A673 (cell line): ENCODE measurements at regions of chr11 and their contacts with region 1.

Region 1: GRCh38 chr11:76152086-76152681 is 54.1 kb downstream of the WNT11 start:
- DNase-seq: peak; percentile 92
- H3K4me3 ChIP-seq: peak overlapping the region; percentile 43
- H3K27ac ChIP-seq: no peak overlapping the region
- H3K4me1 ChIP-seq: no peaks in the 10 kb centered on the region
- H3K27me3 ChIP-seq: no peaks in the 10 kb centered on the region
- CTCF ChIP-seq: peak; percentile 100

Region 2: DNA sequence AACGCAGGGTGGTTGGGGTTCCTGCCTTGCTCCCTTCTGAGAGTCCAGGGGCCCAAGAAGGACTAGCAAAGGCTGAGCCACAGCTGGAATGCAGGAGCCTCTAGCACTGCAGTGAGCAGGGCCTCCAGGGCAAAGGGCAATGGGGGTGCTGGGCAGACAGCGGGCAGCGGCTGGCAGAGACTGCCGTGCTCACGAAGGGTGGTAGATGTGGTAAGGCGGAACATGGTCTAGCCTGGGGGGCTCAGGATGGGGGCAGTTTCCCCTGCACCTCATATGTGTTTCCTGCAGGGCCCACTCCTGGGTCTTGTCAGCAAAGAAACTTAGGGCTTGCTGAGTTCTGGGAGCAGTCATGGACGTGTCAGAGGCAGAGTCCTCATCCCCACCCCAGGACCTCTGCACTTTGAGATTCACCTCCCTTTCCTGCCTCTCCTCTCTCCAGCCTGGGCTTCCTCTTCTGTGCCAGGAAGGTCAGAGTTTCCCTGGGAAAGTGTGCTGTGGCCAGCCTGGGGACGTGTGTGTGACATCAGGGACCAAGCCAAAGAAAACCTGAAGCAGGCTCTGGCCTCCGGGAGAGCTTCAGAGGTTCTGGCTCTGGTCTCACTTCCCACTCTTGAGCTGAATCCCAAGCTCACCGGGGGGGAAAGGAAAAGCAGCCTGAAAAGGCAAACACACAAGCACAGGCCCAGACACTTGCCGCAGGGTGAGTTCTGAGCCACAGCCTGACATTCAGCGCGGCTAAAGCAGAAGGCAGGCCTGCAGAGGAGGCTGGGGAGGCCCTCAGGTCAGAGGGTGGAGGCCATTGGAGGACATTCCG is 430.1 kb before region 1 on chr11:
- CTCF ChIA-PET with region 1: no interaction called
- POLR2A ChIA-PET with region 1: no interaction called
- intact Hi-C with region 1: loop called (anchors 1 kb)
- DNase-seq: no peak
- H3K4me3 ChIP-seq: no peak overlapping the region
- H3K27ac ChIP-seq: no peak overlapping the region
- H3K4me1 ChIP-seq: no peaks in the 10 kb centered on the region
- H3K27me3 ChIP-seq: no peaks in the 10 kb centered on the region
- CTCF ChIP-seq: no peak

Region 3: DNA sequence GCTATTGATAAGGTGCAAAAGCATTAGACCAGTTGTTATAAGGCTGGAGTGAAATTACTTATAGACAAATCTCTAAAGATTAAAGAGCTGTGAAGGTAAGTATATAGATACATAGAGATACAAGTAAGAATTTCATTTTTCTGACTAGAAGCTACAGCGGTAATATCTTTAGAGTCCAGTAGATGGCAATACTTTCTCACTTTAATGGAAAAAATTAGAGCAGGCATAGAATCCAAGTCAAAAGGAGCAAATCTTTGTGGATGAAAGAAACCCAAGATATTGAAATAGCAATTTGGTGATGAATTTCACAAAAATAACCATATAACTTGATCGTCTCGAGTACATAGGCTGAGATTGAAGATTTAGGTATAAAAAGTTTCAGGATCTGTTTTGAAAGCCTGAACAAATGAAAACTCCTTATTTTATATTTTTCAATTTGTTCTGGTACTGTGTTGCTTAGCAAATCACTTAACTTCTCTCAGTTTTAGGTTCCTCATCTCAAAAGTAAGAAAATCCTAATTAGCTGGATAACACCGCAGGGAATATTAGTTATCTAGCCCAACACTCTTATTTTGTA is 255.3 kb before region 1 on chr11:
- CTCF ChIA-PET with region 1: interaction called, 33 read pairs
- POLR2A ChIA-PET with region 1: no interaction called
- intact Hi-C with region 1: loop called (anchors 1 kb)
- DNase-seq: peak; percentile 75
- H3K4me3 ChIP-seq: no peak overlapping the region
- H3K27ac ChIP-seq: no peak overlapping the region
- H3K4me1 ChIP-seq: no peaks in the 10 kb centered on the region
- H3K27me3 ChIP-seq: no peaks in the 10 kb centered on the region
- CTCF ChIP-seq: peak; percentile 81

Region 4: GRCh38 chr11:76013526-76013925 is 138.7 kb before region 1 on chr11:
- CTCF ChIA-PET with region 1: no interaction called
- POLR2A ChIA-PET with region 1: no interaction called
- intact Hi-C with region 1: no loop called
- DNase-seq: no peak
- H3K4me3 ChIP-seq: no peak overlapping the region
- H3K27ac ChIP-seq: no peak overlapping the region
- H3K4me1 ChIP-seq: no peaks in the 10 kb centered on the region
- H3K27me3 ChIP-seq: no peaks in the 10 kb centered on the region
- CTCF ChIP-seq: no peak

Region 5: DNA sequence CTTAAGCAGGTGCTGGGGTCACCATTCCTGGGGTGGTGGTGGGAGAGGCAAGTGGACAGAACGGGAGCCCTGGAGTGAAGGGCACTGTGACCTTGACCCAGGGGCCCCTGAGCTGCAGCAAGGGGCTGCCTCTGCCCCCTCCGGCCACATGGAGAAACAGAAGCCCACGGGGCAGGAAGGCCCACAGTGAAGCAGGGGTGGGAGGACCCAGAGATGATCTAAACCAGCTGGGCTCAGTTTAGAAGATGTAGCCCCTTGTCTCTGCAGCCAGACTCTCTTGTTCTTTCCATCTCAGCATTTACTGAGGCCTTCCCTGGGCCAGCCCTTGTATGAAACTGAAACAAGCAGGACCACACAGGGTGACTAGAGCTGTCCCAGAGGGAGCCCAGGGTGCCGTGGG is 23.6 kb after region 1 on chr11:
- CTCF ChIA-PET with region 1: no interaction called
- POLR2A ChIA-PET with region 1: interaction called, 3 read pairs
- intact Hi-C with region 1: loop called (anchors 1 kb)
- DNase-seq: no peak
- H3K4me3 ChIP-seq: no peak overlapping the region
- H3K27ac ChIP-seq: no peak overlapping the region
- H3K4me1 ChIP-seq: no peaks in the 10 kb centered on the region
- H3K27me3 ChIP-seq: no peaks in the 10 kb centered on the region
- CTCF ChIP-seq: no peak

Region 6: GRCh38 chr11:76734456-76735420 is 582.6 kb after region 1 on chr11:
- CTCF ChIA-PET with region 1: no interaction called
- POLR2A ChIA-PET with region 1: no interaction called
- intact Hi-C with region 1: no loop called
- DNase-seq: no peak
- H3K4me3 ChIP-seq: no peak overlapping the region
- H3K27ac ChIP-seq: no peak overlapping the region
- H3K4me1 ChIP-seq: no peaks in the 10 kb centered on the region
- H3K27me3 ChIP-seq: no peaks in the 10 kb centered on the region
- CTCF ChIP-seq: no peak

Region 7: DNA sequence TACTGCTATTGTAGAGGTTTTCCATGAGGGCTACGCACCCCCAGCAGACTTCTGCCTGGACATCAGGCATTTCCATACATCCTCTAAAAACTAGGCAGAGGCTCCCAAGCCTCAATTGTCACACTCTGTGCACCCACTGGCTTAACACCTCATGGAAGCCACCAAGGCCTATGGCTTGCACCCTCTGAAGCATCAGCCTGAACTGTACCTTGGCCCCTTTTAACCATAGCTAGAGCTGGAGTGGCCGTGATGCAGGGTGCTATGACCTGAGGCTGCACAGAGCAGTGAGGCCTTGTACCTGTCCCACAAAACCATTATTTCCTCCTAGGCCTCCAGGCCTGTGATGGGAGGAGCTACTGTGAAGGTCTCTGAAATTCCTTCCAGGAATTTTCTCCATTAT is 1702.7 kb after region 1 on chr11:
- CTCF ChIA-PET with region 1: no interaction called
- POLR2A ChIA-PET with region 1: interaction called, 11 read pairs
- intact Hi-C with region 1: no loop called
- DNase-seq: no peak
- H3K4me3 ChIP-seq: no peak overlapping the region
- H3K27ac ChIP-seq: no peak overlapping the region
- H3K4me1 ChIP-seq: no peaks in the 10 kb centered on the region
- H3K27me3 ChIP-seq: no peaks in the 10 kb centered on the region
- CTCF ChIP-seq: no peak